ENCODE measurements at regions of chr5 and their contacts with region 1.

Region 1: GRCh38 chr5:176447982-176448608 is at the start of gene FAF2:
- DNase-seq: peak; percentile 95 to 96
- H3K4me3 ChIP-seq: peak within 1 kb of the TSS; percentile 76 to 94 (median 81)
- H3K27ac ChIP-seq: peak within 1 kb of the TSS; percentile 81 to 95 (median 85)
- H3K4me1 ChIP-seq: peaks cover 13 to 19% of the 10 kb centered on the region in 2 donors
- H3K27me3 ChIP-seq: no peaks in the 10 kb centered on the region
- CTCF ChIP-seq: peak; percentile 88 to 99 (median 98)
- POLR2A ChIP-seq: peak; percentile 36 to 79
- total RNA-seq, gene FAF2: 33.6 to 186 (median 43.2) TPM

Region 2: GRCh38 chr5:176388444-176389134 is 59.5 kb before region 1 on chr5 and contains the starts of genes HIGD2A and NOP16:
- intact Hi-C with region 1: no loop called
- DNase-seq: peak; percentile 100
- H3K4me3 ChIP-seq: peak within 1 kb of the TSS; percentile 60 to 90 (median 70)
- H3K27ac ChIP-seq: peak within 1 kb of the TSS; percentile 93 to 97 (median 96)
- H3K4me1 ChIP-seq: peaks cover 8 to 19% of the 10 kb centered on the region in 2 donors
- H3K27me3 ChIP-seq: no peaks in the 10 kb centered on the region
- CTCF ChIP-seq: peak in 2 of 6 experiments; percentile 29 to 42
- POLR2A ChIP-seq: peak in 1 of 2 donors; percentile 41
- total RNA-seq, gene HIGD2A: 112 to 188 (median 138) TPM
- total RNA-seq, gene NOP16: 4.7 to 13.7 (median 8.2) TPM

Region 3: GRCh38 chr5:176519810-176520720 is 72.0 kb after region 1 on chr5:
- intact Hi-C with region 1: no loop called
- DNase-seq: no peak
- H3K4me3 ChIP-seq: no peak overlapping the region
- H3K27ac ChIP-seq: no peak overlapping the region
- H3K4me1 ChIP-seq: peaks cover 0 to 3% of the 10 kb centered on the region in 2 donors
- H3K27me3 ChIP-seq: no peaks in the 10 kb centered on the region
- CTCF ChIP-seq: no peak
- POLR2A ChIP-seq: no peak

Region 4: DNA sequence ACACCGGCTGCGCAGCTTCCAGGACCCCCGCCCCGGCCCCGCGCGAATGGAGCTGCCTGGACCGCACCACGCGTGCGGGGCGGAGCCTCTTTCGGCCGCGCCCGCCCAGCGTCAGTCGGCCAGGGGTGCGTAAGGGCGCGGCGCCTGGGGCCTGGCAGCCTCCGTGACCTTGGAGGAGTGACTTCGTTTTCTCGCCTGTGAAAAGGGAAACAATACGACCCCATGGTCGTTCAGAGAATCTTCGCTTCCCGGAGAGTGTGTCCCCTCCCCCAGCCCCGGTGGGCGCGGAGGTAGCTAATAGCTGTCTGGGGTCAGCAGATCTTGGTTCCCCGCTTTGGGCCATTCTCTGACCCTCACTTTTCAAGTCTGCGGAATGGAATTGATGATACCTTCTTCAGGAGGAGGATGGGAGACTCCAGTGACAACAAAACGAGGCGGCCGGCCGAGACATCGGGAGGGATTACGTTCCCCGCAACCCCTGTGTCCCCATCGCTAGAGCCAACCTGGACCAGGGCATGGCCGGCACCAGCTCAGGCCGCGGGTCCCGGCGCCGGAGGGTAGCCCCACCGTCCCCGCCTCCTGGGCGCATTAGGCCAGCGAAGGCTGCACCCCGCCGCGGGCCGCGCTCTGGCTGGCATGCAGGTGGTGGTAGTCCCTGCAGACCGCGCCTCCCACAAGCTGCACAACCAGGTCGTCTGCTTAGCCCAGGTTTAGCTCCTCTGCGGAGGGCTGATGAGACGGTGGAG is 95.5 kb after region 1 on chr5:
- intact Hi-C with region 1: loop called (anchors 10 kb)
- DNase-seq: peak; percentile 76 to 79
- H3K4me3 ChIP-seq: peak overlapping the region; percentile 5 to 50 (median 42)
- H3K27ac ChIP-seq: peak overlapping the region; percentile 54 to 68 (median 61)
- H3K4me1 ChIP-seq: peaks cover 8 to 22% of the 10 kb centered on the region in 2 donors
- H3K27me3 ChIP-seq: no peaks in the 10 kb centered on the region
- CTCF ChIP-seq: no peak
- POLR2A ChIP-seq: peak in 1 of 2 donors; percentile 83

Region 5: GRCh38 chr5:176609724-176610434 is 161.8 kb after region 1 on chr5 and contains the start of gene GPRIN1:
- intact Hi-C with region 1: no loop called
- DNase-seq: peak in 1 of 2 donors; percentile 19
- H3K4me3 ChIP-seq: peak within 1 kb of the TSS in 1 of 3 donors; percentile 13
- H3K27ac ChIP-seq: no peak within 1 kb of the TSS
- H3K4me1 ChIP-seq: peaks cover 0 to 18% of the 10 kb centered on the region in 2 donors
- H3K27me3 ChIP-seq: peaks cover 6% of the 10 kb centered on the region
- CTCF ChIP-seq: no peak
- POLR2A ChIP-seq: no peak
- total RNA-seq, gene GPRIN1: 0.24 to 0.75 (median 0.30) TPM

Region 6: DNA sequence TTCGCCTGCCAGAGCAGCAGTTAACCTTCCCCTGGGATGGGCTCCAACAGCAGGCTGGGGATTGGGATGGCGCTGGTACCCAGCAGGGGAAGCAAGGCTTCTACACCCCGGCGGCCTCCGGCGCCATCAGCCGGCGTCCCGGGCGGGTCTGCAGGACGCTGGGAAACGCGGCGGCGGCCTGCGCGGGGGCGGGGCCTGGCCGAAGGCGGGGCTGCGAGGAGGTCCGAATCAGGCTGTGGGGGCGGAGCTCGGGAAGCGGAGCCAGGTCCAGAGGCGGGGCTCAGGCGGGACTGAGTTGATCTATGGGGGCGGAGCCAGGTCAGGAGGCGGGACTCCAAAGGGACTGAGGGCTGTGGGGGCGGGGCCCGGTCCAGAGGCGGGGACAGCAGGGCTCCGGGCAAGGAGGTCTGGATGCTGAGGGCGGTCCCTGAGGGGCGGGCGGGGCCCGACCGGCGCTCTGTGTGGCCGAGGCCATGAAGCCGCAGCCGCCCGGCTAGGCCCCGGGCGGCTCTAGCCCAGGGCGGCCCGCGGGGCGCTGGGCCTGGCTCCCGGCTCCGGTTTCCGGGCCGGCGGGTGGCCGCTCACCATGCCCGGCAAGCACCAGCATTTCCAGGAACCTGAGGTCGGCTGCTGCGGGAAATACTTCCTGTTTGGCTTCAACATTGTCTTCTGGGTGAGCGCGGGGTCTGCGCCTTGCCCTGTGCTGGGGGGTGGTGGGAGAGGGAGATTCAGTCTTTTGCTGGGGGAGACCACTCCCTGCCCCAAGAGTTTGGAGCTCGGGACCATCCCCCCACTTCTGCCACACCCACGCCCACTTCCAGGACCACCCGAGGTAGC is 199.2 kb after region 1 on chr5 and contains the start of gene TSPAN17:
- intact Hi-C with region 1: loop called (anchors 10 kb)
- DNase-seq: peak; percentile 100
- H3K4me3 ChIP-seq: peak within 1 kb of the TSS; percentile 26 to 89 (median 43)
- H3K27ac ChIP-seq: peak within 1 kb of the TSS in 2 of 3 donors; percentile 43 to 61
- H3K4me1 ChIP-seq: peaks cover 12 to 17% of the 10 kb centered on the region in 2 donors
- H3K27me3 ChIP-seq: no peaks in the 10 kb centered on the region
- CTCF ChIP-seq: peak in 3 of 6 experiments; percentile 18 to 35 (median 27)
- POLR2A ChIP-seq: peak in 1 of 2 donors; percentile 67
- total RNA-seq, gene TSPAN17: 18.9 to 24.7 (median 21.0) TPM